Common myeloid progenitor, CD34-positive (primary cell): ENCODE measurements at regions of chr7 and their contacts with region 1.

Region 1: GRCh38 chr7:113424185-113424817 is 305.9 kb upstream of the SMIM30 start:
- DNase-seq: no peak
- H3K4me3 ChIP-seq: no peak overlapping the region
- H3K27ac ChIP-seq: no peak overlapping the region
- H3K4me1 ChIP-seq: no peaks in the 10 kb centered on the region
- H3K27me3 ChIP-seq: peaks cover 0 to 2% (median 0%) of the 10 kb centered on the region in 5 experiments

Region 2: GRCh38 chr7:112550468-112551060 is 873.7 kb before region 1 on chr7:
- CTCF ChIA-PET with region 1: interaction called, 15 read pairs
- POLR2A ChIA-PET with region 1: no interaction called
- DNase-seq: peak; percentile 64 to 84 (median 73)
- H3K4me3 ChIP-seq: no peak overlapping the region
- H3K27ac ChIP-seq: no peak overlapping the region
- H3K4me1 ChIP-seq: no peaks in the 10 kb centered on the region
- H3K27me3 ChIP-seq: peaks cover 0 to 4% (median 3%) of the 10 kb centered on the region in 5 experiments

Region 3: DNA sequence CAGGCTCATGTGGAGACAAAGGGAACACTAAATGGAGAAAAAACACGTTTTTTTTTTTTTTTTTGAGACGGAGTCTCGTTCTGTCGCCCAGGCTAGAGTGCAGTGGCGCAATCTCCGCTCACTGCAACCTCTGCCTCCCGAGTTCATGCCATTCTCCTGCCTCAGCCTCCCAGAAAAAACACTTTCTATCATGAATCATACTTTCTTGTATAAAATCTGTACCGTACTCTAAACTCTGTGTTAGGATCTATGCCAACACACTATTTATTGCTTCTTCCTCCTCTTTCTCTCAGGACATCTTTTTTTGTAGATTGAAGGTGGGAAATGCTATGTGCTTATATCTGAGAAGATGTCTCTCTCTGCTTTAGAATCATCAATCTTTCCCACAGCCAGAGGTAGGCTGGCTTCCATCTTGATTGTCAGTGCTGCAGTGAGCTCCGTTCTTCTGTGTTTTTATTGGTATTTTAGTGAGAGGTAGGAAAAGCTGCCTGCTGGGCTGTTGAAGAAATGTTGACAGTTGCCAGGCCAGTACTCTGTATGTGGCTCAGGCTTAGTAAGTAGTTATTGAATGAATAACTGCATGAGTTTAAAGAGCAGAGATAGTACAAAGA is 438.8 kb before region 1 on chr7:
- CTCF ChIA-PET with region 1: no interaction called
- POLR2A ChIA-PET with region 1: no interaction called
- DNase-seq: no peak
- H3K4me3 ChIP-seq: no peak overlapping the region
- H3K27ac ChIP-seq: no peak overlapping the region
- H3K4me1 ChIP-seq: peaks cover 0 to 2% (median 0%) of the 10 kb centered on the region in 4 experiments
- H3K27me3 ChIP-seq: no peaks in the 10 kb centered on the region

Region 4: GRCh38 chr7:113217314-113217713 is 207.0 kb before region 1 on chr7:
- CTCF ChIA-PET with region 1: no interaction called
- POLR2A ChIA-PET with region 1: no interaction called
- DNase-seq: no peak
- H3K4me3 ChIP-seq: no peak overlapping the region
- H3K27ac ChIP-seq: no peak overlapping the region
- H3K4me1 ChIP-seq: no peaks in the 10 kb centered on the region
- H3K27me3 ChIP-seq: no peaks in the 10 kb centered on the region